ENCODE measurements at regions of chr9 and their contacts with region 1.

Region 1: DNA sequence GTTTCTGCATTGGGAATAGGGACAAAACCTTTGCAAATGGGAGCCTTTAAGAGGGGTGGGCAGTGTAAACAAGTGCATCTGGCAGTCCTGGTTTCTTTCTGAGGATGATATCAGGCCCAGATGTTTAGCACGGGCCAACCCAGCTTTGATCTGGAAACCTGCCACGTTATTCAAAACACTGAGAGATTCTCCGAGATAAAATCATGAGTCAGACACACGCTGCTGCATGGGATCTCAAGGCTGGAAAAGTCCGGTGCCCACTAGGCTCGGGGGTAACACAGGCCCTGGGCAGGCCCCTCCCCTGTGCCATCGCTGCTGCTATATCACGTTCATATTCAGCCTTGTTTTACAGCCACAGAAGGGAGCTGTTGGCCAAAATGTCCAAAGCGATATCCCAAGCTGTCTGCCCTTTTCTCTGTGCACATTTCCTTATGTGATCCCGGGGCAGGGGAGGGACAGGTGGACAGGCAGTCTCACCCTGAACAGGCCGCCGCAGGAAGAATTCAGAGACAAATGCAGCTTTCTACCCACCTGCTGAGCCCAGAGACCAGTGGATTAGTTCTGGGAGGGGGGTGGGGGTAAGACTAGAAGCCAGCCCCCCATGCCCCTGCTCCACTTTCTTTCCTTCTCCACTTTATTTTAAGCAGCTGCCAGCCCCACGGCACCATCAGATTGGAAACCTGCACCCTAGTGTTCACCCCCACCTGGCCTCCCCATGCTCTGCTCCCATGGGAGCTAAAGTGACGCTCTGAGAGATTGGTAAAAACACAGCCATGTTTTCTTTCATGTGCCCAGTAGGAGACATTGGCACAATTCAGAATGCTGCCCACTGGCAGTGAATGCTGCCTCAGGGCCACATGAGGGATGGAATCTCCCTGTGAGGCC is 63.1 kb downstream of the TMOD1 start:
- ATAC-seq: peak; percentile 19 to 95 (median 63)
- H3K4me3 ChIP-seq: no peak overlapping the region
- H3K27ac ChIP-seq: no peak overlapping the region
- H3K4me1 ChIP-seq: peaks cover 0 to 5% of the 10 kb centered on the region in 2 donors

Region 2: GRCh38 chr9:97501177-97501971 is 63.2 kb before region 1 on chr9 and contains the start of gene TMOD1:
- in situ Hi-C with region 1: loop called in 1 of 9 experiments (anchors 10 kb)
- ATAC-seq: peak; percentile 70 to 93 (median 84)
- H3K4me3 ChIP-seq: peak within 1 kb of the TSS; percentile 34 to 68 (median 43)
- H3K27ac ChIP-seq: no peak within 1 kb of the TSS
- H3K4me1 ChIP-seq: peaks cover 19 to 20% of the 10 kb centered on the region in 2 donors
- total RNA-seq, gene TMOD1: 0.15 to 76.0 (median 1.2) TPM

Region 3: GRCh38 chr9:97710356-97711222 is 146.1 kb after region 1 on chr9:
- in situ Hi-C with region 1: no loop called
- ATAC-seq: peak; percentile 80 to 98 (median 91)
- H3K4me3 ChIP-seq: no peak overlapping the region
- H3K27ac ChIP-seq: no peak overlapping the region
- H3K4me1 ChIP-seq: no peaks in the 10 kb centered on the region